Right ventricle myocardium superior (tissue), 1 donor: ENCODE measurements at regions of chr11 and their contacts with region 1.

Region 1: GRCh38 chr11:10322830-10323792 is 18.2 kb downstream of the ADM start:
- DNase-seq: peak; percentile 43
- ATAC-seq: peak; percentile 55

Region 2: GRCh38 chr11:9757809-9758636 is 565.1 kb before region 1 on chr11:
- intact Hi-C with region 1: loop called (anchors 5 kb)
- DNase-seq: peak; percentile 93
- ATAC-seq: peak; percentile 80

Region 3: DNA sequence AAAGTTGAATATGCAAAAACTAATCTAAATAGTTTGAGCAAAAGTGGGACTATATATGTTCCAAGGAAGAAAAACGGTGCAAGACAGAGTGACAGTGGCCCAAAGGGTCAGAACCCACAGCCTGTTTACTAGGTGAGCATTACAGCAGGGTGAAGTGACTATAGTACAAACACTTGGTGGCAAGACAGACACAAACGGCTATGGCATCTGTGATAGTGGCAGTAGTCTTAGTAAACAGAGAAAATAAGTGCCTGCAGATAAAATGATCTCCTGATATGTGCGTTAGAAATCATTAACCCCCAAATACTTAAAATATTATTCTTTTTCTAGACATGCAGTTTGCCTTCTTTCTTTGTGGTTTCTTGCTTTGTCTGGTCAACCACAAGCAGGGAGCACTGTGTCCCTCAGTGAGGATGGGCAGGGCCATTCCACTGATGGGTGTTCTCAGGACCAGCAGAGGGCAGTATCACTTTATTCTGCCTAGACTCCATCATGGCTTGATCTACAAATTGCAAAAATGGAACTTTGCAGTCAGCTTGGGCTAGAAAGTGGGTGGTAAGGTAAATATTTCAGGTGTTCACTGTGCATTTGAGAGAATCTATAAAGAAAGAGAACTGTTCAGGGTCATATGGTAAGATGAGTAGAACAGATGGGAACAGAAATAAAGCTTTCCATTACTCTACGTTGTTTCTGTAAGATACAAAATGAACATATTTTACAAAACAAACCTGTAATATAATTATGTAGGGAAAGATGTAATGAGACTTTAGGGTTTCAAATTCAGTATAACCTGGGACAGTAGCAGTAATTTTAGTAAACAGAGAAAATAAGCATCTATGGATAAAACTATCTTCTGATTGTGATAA is 461.0 kb before region 1 on chr11:
- intact Hi-C with region 1: loop called (anchors 5 kb)
- DNase-seq: peak; percentile 39
- ATAC-seq: peak; percentile 85

Region 4: DNA sequence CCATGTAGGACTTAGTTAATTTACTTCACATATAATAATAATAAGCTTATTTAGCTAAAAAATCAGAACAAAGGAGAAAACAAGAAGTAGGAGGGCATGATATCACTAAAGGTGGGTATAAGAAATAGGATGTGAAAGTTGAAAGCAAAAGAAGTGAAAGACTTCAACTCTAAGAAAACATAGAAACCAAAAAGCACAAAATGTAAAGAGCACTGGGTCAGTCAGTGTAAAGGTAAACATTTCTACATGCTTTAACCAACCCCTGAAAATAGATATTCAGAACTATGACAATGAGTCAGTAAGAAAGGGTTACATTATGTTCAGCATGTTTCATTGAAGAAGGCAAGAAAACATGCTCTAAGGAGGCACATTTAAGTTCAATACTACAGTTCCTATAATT is 360.4 kb before region 1 on chr11:
- intact Hi-C with region 1: no loop called
- DNase-seq: no peak
- ATAC-seq: no peak

Region 5: DNA sequence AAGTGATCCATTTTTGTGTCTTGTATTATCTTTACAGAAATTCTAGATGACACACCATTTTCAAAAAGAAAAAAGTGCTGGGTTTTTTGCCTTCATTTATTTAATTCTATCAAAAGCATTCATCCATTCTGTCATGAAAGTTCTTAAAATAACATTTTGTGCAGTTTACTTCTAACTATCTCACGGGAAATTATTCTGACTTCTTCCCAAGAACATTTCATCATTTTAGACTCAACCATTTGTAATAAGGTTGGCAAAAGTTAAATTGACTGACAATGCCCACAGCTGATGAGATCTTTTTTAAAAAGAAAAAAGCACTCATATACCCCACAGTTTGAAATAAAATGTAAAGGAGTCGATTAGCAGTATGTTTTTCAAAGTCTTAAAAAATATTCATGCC is 97.6 kb before region 1 on chr11:
- intact Hi-C with region 1: no loop called
- DNase-seq: no peak
- ATAC-seq: peak; percentile 60

Region 6: GRCh38 chr11:10365045-10365444 is 41.9 kb after region 1 on chr11:
- intact Hi-C with region 1: loop called (anchors 2 kb)
- DNase-seq: no peak
- ATAC-seq: no peak